Activated CD4-positive, alpha-beta T cell treated with anti-CD3 and anti-CD28 coated beads, Interleukin-2, amount 10 ng/mL, durations not matched to agents 24 days and 14 days (primary cell): ENCODE measurements at regions of chr2 and their contacts with region 1.

Region 1: GRCh38 chr2:38750891-38751595 is at the start of gene SRSF7:
- DNase-seq: peak; percentile 99
- H3K4me3 Mint-ChIP-seq: peak within 1 kb of the TSS; percentile 91
- H3K27ac Mint-ChIP-seq: peak within 1 kb of the TSS; percentile 98
- H3K4me1 Mint-ChIP-seq: peaks cover 47% of the 10 kb centered on the region
- H3K27me3 Mint-ChIP-seq: peaks cover 2% of the 10 kb centered on the region
- total RNA-seq, gene SRSF7: 415 and 419 TPM in 2 replicates

Region 2: GRCh38 chr2:38763228-38763627 is 12.2 kb after region 1 on chr2:
- intact Hi-C with region 1: loop called (anchors 1 kb)
- DNase-seq: peak; percentile 69
- H3K4me3 Mint-ChIP-seq: no peak overlapping the region
- H3K27ac Mint-ChIP-seq: no peak overlapping the region
- H3K4me1 Mint-ChIP-seq: peaks cover 3% of the 10 kb centered on the region
- H3K27me3 Mint-ChIP-seq: no peaks in the 10 kb centered on the region

Region 3: GRCh38 chr2:38778687-38779082 is 27.6 kb after region 1 on chr2:
- intact Hi-C with region 1: loop called (anchors 1 kb)
- DNase-seq: no peak
- H3K4me3 Mint-ChIP-seq: peak overlapping the region; percentile 100
- H3K27ac Mint-ChIP-seq: peak overlapping the region; percentile 100
- H3K4me1 Mint-ChIP-seq: peaks cover 13% of the 10 kb centered on the region
- H3K27me3 Mint-ChIP-seq: peaks cover 18% of the 10 kb centered on the region